A549 (cell line): ENCODE measurements at regions of chr14 and their contacts with region 1.

Region 1: GRCh38 chr14:36655963-36656686 is 5.5 kb upstream of the PAX9 start:
- DNase-seq: peak; percentile 66 to 77
- ATAC-seq: peak; percentile 92 to 94
- H3K4me3 ChIP-seq: peak overlapping the region; percentile 33
- H3K27ac ChIP-seq: peak overlapping the region; percentile 15 to 82; a peak in 4 of 6 replicates
- H3K4me1 ChIP-seq: peaks cover 4% of the 10 kb centered on the region; the same call in 1 of the 3 replicates
- CTCF ChIP-seq: peak; percentile 82
- EP300 ChIP-seq: no peak
- POLR2A ChIP-seq: no peak
- RAD21 ChIP-seq: peak; percentile 40 to 56

Region 2: GRCh38 chr14:36634248-36634647 is 21.9 kb before region 1 on chr14:
- CTCF ChIA-PET with region 1: interaction called, 11 read pairs
- POLR2A ChIA-PET with region 1: interaction called, 4 read pairs
- DNase-seq: no peak
- ATAC-seq: no peak
- H3K4me3 ChIP-seq: no peak overlapping the region
- H3K27ac ChIP-seq: no peak overlapping the region
- H3K4me1 ChIP-seq: no peaks in the 10 kb centered on the region
- CTCF ChIP-seq: no peak
- EP300 ChIP-seq: no peak
- POLR2A ChIP-seq: no peak
- RAD21 ChIP-seq: no peak

Region 3: DNA sequence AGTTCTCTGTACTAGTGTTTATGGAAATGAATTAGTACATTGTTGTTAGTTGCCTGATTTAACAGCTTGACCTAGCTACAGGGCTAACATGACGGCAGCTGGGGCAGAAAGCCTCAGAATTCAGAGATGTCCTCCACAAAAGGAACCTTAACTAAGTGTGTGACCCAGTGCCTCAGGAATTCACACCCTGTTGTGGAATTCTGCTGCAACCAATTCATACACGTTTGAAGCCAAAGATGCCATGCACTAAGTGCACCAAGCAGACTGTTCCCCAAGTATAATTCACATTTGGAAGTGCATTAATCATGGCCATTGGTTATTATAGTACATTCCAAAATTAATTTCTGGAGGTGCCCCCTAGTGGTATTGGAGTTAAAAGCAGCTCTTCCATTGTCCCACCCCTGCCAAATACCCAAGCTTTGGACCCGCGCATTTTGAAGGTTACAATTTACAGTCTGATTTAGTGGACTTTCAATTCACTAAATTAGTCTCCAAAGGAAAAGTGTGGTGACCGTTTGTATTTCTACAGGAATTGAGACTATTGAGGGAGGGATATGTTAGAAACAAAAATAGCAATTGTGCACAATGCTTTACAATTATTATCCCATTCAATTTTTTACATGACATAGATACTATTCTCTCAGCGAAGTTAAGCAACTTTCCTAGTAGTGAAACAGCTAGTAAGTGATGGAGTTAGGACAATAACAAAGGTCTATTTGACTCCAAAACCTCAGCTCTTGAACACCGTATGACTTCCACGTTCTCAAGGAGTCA is 91.5 kb after region 1 on chr14:
- CTCF ChIA-PET with region 1: interaction called, 11 read pairs
- POLR2A ChIA-PET with region 1: no interaction called
- DNase-seq: peak; percentile 17 to 32
- ATAC-seq: peak in 1 of 2 experiments; percentile 75; a peak in 4 of 6 replicates
- H3K4me3 ChIP-seq: no peak overlapping the region
- H3K27ac ChIP-seq: no peak overlapping the region
- H3K4me1 ChIP-seq: no peaks in the 10 kb centered on the region
- CTCF ChIP-seq: peak; percentile 57
- EP300 ChIP-seq: no peak
- POLR2A ChIP-seq: no peak
- RAD21 ChIP-seq: peak in 1 of 2 experiments; percentile 26; a peak in 3 of 5 replicates

Region 4: DNA sequence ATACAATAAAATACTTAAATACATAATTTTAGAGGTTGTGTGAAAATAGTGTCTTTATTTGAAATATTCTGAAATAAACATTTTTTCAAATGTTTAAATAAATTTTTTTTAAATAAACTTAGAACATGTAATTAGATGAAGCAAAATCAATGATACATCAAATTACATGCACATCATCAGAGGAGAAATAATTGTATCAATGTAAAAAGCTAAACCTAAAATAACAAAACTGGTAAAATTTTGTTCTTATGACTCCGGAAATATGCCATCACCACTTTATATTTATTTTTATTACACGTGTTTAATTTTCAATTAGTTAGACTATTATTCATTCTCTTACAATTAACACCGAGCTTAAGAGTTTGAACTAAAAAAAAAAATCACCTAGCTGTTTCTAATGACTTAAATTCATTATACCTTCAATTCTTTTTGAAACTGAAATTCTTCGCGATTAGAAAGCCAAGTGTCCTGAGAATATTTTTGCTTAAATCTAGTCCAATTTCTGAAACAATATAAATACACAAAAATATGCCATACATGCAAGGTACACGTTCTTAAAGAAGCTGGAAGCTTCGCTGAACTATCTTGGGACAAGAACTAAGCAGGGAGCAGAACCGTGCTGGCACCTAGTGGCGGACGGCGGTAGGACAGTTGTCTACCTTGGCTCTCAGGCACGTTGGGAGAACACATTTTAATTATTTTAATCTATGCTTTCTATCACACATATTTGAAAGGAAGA is 285.8 kb after region 1 on chr14:
- CTCF ChIA-PET with region 1: interaction called, 71 read pairs
- POLR2A ChIA-PET with region 1: no interaction called
- DNase-seq: peak; percentile 34 to 75
- ATAC-seq: peak; percentile 91 to 95
- H3K4me3 ChIP-seq: no peak overlapping the region
- H3K27ac ChIP-seq: no peak overlapping the region
- H3K4me1 ChIP-seq: peaks cover 20% of the 10 kb centered on the region; the same call in 2 of the 3 replicates
- CTCF ChIP-seq: peak; percentile 87
- EP300 ChIP-seq: no peak
- POLR2A ChIP-seq: no peak
- RAD21 ChIP-seq: peak; percentile 89 to 90

Region 5: GRCh38 chr14:37098132-37098531 is 442.0 kb after region 1 on chr14:
- CTCF ChIA-PET with region 1: no interaction called
- POLR2A ChIA-PET with region 1: no interaction called
- DNase-seq: no peak
- ATAC-seq: no peak
- H3K4me3 ChIP-seq: no peak overlapping the region
- H3K27ac ChIP-seq: no peak overlapping the region
- H3K4me1 ChIP-seq: no peaks in the 10 kb centered on the region
- CTCF ChIP-seq: no peak
- EP300 ChIP-seq: no peak
- POLR2A ChIP-seq: no peak
- RAD21 ChIP-seq: no peak

Region 6: GRCh38 chr14:37116933-37117849 is 461.1 kb after region 1 on chr14:
- CTCF ChIA-PET with region 1: interaction called, 29 read pairs
- POLR2A ChIA-PET with region 1: no interaction called
- DNase-seq: peak; percentile 40 to 74
- ATAC-seq: peak; percentile 71 to 84
- H3K4me3 ChIP-seq: no peak overlapping the region; the same call in 2 of the 3 replicates
- H3K27ac ChIP-seq: peak overlapping the region; percentile 20 to 42; a peak in 1 of 6 replicates
- H3K4me1 ChIP-seq: peaks cover 21% of the 10 kb centered on the region; the same call in 2 of the 3 replicates
- CTCF ChIP-seq: peak; percentile 65
- EP300 ChIP-seq: no peak
- POLR2A ChIP-seq: no peak
- RAD21 ChIP-seq: peak; percentile 76 to 81